ENCODE measurements at regions of chr6 and their contacts with region 1.

Region 1: GRCh38 chr6:16128759-16129622 is at the start of gene MYLIP:
- DNase-seq: peak; percentile 99 to 100 (median 100)
- ATAC-seq: peak; percentile 92
- H3K4me3 ChIP-seq: peak within 1 kb of the TSS; percentile 90
- H3K27ac ChIP-seq: peak within 1 kb of the TSS; percentile 92
- H3K4me1 ChIP-seq: peaks cover 20 to 21% of the 10 kb centered on the region in 2 experiments
- H3K27me3 ChIP-seq: no peaks in the 10 kb centered on the region
- CTCF ChIP-seq: peak; percentile 94 to 99 (median 99)
- EP300 ChIP-seq: peak; percentile 50
- POLR2A ChIP-seq: peak; percentile 99
- RAD21 ChIP-seq: peak; percentile 99 to 100
- polyA plus RNA-seq, gene MYLIP: 10.8 to 12.9 TPM

Region 2: GRCh38 chr6:15691250-15691869 is 437.6 kb before region 1 on chr6:
- CTCF ChIA-PET with region 1: interaction called, 128 read pairs
- POLR2A ChIA-PET with region 1: interaction called, 18 read pairs
- in situ Hi-C with region 1: no loop called
- intact Hi-C with region 1: loop called (anchors 1 kb)
- DNase-seq: peak; percentile 90 to 95 (median 92)
- ATAC-seq: peak; percentile 100
- H3K4me3 ChIP-seq: no peak overlapping the region
- H3K27ac ChIP-seq: no peak overlapping the region
- H3K4me1 ChIP-seq: peaks cover 0 to 11% of the 10 kb centered on the region in 2 experiments; a peak in 2 of 5 replicates
- H3K27me3 ChIP-seq: no peaks in the 10 kb centered on the region
- CTCF ChIP-seq: peak; percentile 100
- EP300 ChIP-seq: peak; percentile 39; the same call in 1 of the 2 replicates
- POLR2A ChIP-seq: no peak
- RAD21 ChIP-seq: peak; percentile 100

Region 3: GRCh38 chr6:15793288-15793687 is 335.7 kb before region 1 on chr6:
- CTCF ChIA-PET with region 1: no interaction called
- POLR2A ChIA-PET with region 1: interaction called, 4 read pairs
- in situ Hi-C with region 1: no loop called
- intact Hi-C with region 1: loop called (anchors 10 kb)
- DNase-seq: peak; percentile 33 to 89 (median 56)
- ATAC-seq: peak; percentile 92
- H3K4me3 ChIP-seq: no peak overlapping the region
- H3K27ac ChIP-seq: peak overlapping the region; percentile 50; the same call in 2 of the 3 replicates
- H3K4me1 ChIP-seq: peaks cover 8 to 29% of the 10 kb centered on the region in 2 experiments
- H3K27me3 ChIP-seq: no peaks in the 10 kb centered on the region
- CTCF ChIP-seq: no peak
- EP300 ChIP-seq: peak; percentile 87
- POLR2A ChIP-seq: no peak
- RAD21 ChIP-seq: no peak; a peak in 1 of 4 replicates

Region 4: GRCh38 chr6:15914553-15914952 is 214.4 kb before region 1 on chr6:
- CTCF ChIA-PET with region 1: no interaction called
- POLR2A ChIA-PET with region 1: interaction called, 186 read pairs
- in situ Hi-C with region 1: no loop called
- intact Hi-C with region 1: no loop called
- DNase-seq: no peak
- ATAC-seq: no peak
- H3K4me3 ChIP-seq: no peak overlapping the region
- H3K27ac ChIP-seq: no peak overlapping the region
- H3K4me1 ChIP-seq: peaks cover 9 to 33% of the 10 kb centered on the region in 2 experiments
- H3K27me3 ChIP-seq: no peaks in the 10 kb centered on the region
- CTCF ChIP-seq: no peak
- EP300 ChIP-seq: no peak
- POLR2A ChIP-seq: no peak
- RAD21 ChIP-seq: no peak

Region 5: DNA sequence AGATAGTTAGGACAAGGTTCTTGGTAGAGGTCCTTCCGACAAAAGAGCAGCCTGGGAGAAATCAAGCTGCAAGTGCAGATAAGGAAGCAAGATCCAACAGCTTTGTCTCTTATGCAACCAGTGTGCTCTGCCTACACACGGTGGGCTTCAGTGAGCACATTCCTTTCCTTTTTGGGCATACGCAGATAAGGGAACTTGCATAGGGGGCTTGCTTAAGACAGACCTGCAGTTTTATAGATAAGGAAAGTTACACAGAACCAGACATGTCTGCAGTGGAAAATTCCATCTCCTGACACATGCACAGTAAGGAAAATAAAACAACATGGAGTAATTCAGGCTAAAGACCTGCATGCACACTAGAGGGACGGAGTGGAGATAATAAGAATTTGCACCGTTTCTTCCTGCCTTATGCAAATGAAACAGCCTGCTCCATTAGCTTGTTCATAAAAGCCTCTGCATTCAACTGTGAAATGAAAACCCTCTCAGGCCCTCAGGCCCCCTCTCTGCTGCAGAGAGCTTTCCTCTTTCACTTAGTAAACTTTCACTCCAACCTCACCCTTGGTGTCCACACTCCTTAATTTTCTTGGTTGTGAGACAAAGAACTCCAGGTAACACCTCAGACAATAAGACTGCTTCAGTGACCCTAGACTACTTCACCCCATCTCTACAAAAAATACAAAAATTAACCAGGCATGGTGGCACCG is 97.6 kb before region 1 on chr6:
- CTCF ChIA-PET with region 1: no interaction called
- POLR2A ChIA-PET with region 1: interaction called, 7 read pairs
- in situ Hi-C with region 1: no loop called
- intact Hi-C with region 1: loop called (anchors 1 kb)
- DNase-seq: peak; percentile 93 to 98 (median 94)
- ATAC-seq: peak; percentile 97
- H3K4me3 ChIP-seq: no peak overlapping the region
- H3K27ac ChIP-seq: peak overlapping the region; percentile 83
- H3K4me1 ChIP-seq: peaks cover 10 to 33% of the 10 kb centered on the region in 2 experiments
- H3K27me3 ChIP-seq: no peaks in the 10 kb centered on the region
- CTCF ChIP-seq: no peak; a peak in 1 of 6 replicates
- EP300 ChIP-seq: peak; percentile 100
- POLR2A ChIP-seq: no peak
- RAD21 ChIP-seq: peak; percentile 38 to 62

Region 6: DNA sequence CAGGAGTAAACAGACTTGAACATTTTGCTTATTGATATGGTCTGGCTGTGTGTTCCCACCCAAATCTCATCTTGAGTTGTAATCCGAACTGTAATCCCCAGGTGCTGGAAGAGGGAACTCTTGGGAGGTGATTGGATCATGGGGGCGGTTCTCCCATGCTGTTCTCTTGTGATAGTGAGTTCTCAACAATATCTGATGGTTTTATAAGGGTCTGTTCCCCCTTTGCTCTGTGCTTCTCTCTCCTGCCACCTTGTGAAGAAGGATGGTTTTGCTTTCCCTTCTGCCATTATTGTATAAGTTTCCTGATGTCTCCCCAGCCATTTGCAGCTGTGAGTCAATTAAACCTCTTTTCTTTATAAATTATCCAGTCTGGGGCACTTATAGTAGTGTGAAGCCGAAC is 39.9 kb after region 1 on chr6:
- CTCF ChIA-PET with region 1: no interaction called
- POLR2A ChIA-PET with region 1: interaction called, 3 read pairs
- in situ Hi-C with region 1: no loop called
- intact Hi-C with region 1: loop called (anchors 2 kb)
- DNase-seq: peak in 2 of 4 experiments; percentile 38 to 82
- ATAC-seq: peak; percentile 92
- H3K4me3 ChIP-seq: no peak overlapping the region
- H3K27ac ChIP-seq: no peak overlapping the region
- H3K4me1 ChIP-seq: peaks cover 0 to 17% of the 10 kb centered on the region in 2 experiments; a peak in 4 of 5 replicates
- H3K27me3 ChIP-seq: no peaks in the 10 kb centered on the region
- CTCF ChIP-seq: peak; percentile 76 to 86 (median 78)
- EP300 ChIP-seq: peak; percentile 69
- POLR2A ChIP-seq: no peak
- RAD21 ChIP-seq: peak; percentile 82 to 94

Measured in K562 (cell line).